AG04449 (cell line): ENCODE measurements at regions of chrX and their contacts with region 1.

Region 1: GRCh38 chrX:23782863-23783568 is at the start of gene SAT1:
- DNase-seq: peak; percentile 51
- H3K4me3 ChIP-seq: peak within 1 kb of the TSS; percentile 76
- CTCF ChIP-seq: peak; percentile 66

Region 2: GRCh38 chrX:23742697-23743622 is 40.1 kb before region 1 on chrX and contains the start of gene ACOT9:
- CTCF ChIA-PET with region 1: interaction called, 6 read pairs
- POLR2A ChIA-PET with region 1: interaction called, 20 read pairs
- DNase-seq: peak; percentile 75
- H3K4me3 ChIP-seq: peak within 1 kb of the TSS; percentile 76
- CTCF ChIP-seq: no peak

Region 3: DNA sequence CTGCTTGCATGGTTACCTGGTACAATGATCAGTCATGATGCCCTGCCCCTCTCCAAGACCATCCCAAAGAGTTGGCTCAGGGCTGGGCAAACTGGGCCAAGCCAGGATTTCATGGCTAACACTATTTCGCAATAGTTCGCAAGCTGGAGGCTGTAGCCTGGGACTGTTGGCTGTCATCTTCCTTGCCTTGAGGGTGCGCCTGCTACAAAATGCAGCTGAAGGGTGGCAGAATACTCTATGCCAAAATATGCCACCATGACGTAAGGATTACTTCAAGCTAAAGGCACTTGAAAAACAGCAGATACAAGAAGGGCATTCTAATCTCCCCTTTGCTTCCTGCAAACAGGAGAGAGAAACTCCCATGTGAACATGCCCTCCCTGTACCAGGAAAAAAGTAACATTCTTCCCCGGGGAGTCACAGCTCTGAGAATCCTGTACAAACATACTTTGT is 20.9 kb after region 1 on chrX:
- CTCF ChIA-PET with region 1: interaction called, 14 read pairs
- POLR2A ChIA-PET with region 1: interaction called, 13 read pairs
- DNase-seq: no peak
- H3K4me3 ChIP-seq: no peak overlapping the region
- CTCF ChIP-seq: no peak

Region 4: DNA sequence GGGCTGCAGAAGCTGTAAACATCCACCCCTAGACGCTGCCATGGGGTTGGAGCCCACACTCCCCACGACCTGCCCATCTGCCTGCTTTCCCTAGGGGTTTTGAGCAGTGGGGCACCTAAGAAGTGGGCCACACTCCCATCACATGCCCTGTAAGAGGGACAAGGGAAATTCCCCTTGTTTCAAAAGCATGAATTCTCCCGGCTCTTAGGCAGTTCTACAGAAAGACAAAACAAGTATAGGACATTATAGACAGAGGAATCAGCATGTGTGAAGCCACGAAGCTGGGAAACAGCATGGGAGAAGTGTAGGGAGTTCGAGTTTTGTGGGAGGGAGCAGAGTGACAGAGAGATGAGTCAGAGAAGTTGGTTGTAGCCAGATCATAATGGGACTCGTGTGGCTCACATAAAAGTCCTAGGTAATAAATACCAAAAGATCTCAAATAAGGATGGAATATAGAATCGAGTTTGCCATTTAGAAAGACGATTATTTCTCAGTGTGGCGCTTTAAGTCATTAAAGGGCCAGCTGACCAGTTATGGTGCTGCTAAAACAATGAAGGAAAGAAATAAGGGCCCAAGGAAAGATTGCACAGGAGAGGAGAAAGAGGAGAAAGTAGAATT is 100.8 kb after region 1 on chrX:
- CTCF ChIA-PET with region 1: interaction called, 6 read pairs
- POLR2A ChIA-PET with region 1: interaction called, 12 read pairs
- DNase-seq: no peak
- H3K4me3 ChIP-seq: no peak overlapping the region
- CTCF ChIP-seq: no peak

Region 5: DNA sequence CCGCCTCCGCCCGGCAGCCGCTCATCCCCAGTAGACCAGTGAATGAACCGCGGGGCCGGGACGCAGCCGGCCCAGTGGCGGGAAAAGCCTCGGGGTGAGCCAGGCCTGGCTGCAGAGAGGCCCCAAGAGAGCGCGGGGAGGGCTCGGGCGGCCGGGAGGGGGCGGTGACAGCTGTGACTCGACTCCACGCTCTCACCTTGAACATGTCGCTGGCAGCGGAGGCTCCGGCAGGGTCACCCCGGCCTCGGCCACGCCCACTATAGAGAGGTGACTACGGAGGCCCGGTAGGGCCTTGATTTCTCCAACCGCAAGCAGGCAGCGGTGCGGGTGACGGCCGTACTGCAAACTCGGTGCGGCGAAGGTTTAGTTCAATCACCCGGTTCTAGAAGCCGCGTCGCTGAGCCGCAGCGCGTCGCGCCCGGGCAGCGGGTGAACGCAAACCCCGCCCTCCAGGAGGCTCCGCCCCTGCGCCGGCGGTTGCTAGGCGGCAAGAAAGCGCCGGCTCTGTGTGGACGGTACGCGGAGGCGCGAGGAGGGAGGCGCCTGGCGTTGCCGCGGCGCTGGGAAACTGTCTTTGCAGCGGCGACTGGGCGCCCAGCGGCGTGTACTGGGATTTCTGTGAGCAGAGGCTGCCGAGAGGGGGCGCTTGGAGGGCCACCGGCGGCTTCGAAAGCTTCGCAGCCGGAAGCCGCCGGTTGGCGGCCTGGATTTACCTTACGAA is 124.6 kb after region 1 on chrX and contains the starts of genes APOO and CXorf58:
- CTCF ChIA-PET with region 1: interaction called, 111 read pairs
- POLR2A ChIA-PET with region 1: interaction called, 33 read pairs
- DNase-seq: no peak
- H3K4me3 ChIP-seq: peak within 1 kb of the TSS; percentile 67
- CTCF ChIP-seq: peak; percentile 70